Endothelial cell of umbilical vein (primary cell): ENCODE measurements at regions of chr4 and their contacts with region 1.

Region 1: DNA sequence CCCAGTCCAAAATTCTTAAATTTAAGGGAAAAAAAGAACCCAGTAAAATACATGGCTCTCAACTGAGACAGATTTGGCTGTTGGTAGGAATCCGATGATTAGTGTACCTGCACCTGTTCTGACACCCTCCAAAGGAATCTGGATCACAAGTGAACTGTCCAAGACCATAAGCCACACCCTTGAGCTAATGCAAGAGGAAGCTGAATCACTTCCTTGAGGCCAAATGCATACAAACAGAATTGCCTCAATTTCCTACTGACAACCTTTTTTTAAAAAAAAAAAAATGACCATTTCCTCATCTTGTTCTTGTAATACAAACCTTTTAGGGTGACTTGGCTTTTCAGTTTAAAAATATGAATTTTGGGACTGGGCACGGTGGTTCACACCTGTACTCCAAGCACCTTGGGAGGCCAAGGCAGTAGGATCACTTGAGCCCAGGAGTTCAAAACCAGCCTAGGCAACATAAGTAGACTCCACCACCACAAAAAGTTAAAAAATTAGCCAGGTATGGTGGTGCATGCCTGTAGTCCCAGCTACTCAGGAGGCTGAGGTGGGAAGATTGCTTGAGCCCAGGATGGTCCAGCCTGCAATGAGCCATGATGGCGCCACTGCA is 10.7 kb upstream of the FBXL5 start:
- DNase-seq: peak; percentile 60
- H3K4me3 ChIP-seq: no peak overlapping the region
- H3K27ac ChIP-seq: peak overlapping the region; percentile 77
- H3K4me1 ChIP-seq: peaks cover 35% of the 10 kb centered on the region
- H3K27me3 ChIP-seq: no peaks in the 10 kb centered on the region
- CTCF ChIP-seq: no peak
- POLR2A ChIP-seq: no peak

Region 2: GRCh38 chr4:15100994-15101695 is 564.7 kb before region 1 on chr4:
- CTCF ChIA-PET with region 1: no interaction called
- POLR2A ChIA-PET with region 1: no interaction called
- dilution Hi-C with region 1: no loop called
- intact Hi-C with region 1: no loop called
- DNase-seq: no peak
- H3K4me3 ChIP-seq: no peak overlapping the region
- H3K27ac ChIP-seq: no peak overlapping the region
- H3K4me1 ChIP-seq: no peaks in the 10 kb centered on the region
- H3K27me3 ChIP-seq: no peaks in the 10 kb centered on the region
- CTCF ChIP-seq: no peak
- POLR2A ChIP-seq: no peak

Region 3: GRCh38 chr4:15681207-15682015 is 15.6 kb after region 1 on chr4 and contains the start of gene FAM200B:
- CTCF ChIA-PET with region 1: interaction called, 6 read pairs
- POLR2A ChIA-PET with region 1: interaction called, 4 read pairs
- dilution Hi-C with region 1: no loop called
- intact Hi-C with region 1: loop called (anchors 1 kb)
- DNase-seq: peak; percentile 99
- H3K4me3 ChIP-seq: peak within 1 kb of the TSS; percentile 65 to 99 (median 97)
- H3K27ac ChIP-seq: peak within 1 kb of the TSS; percentile 95
- H3K4me1 ChIP-seq: peaks cover 49% of the 10 kb centered on the region
- H3K27me3 ChIP-seq: no peaks in the 10 kb centered on the region
- CTCF ChIP-seq: peak in 1 of 2 donors; percentile 29
- POLR2A ChIP-seq: peak; percentile 85
- total RNA-seq, gene FAM200B: 20.6 and 24.6 TPM in 2 replicates

Region 4: GRCh38 chr4:15690020-15690809 is 24.4 kb after region 1 on chr4:
- CTCF ChIA-PET with region 1: no interaction called
- POLR2A ChIA-PET with region 1: no interaction called
- dilution Hi-C with region 1: no loop called
- intact Hi-C with region 1: loop called (anchors 1 kb)
- DNase-seq: peak; percentile 68
- H3K4me3 ChIP-seq: no peak overlapping the region
- H3K27ac ChIP-seq: peak overlapping the region; percentile 82
- H3K4me1 ChIP-seq: peaks cover 29% of the 10 kb centered on the region
- H3K27me3 ChIP-seq: no peaks in the 10 kb centered on the region
- CTCF ChIP-seq: no peak
- POLR2A ChIP-seq: no peak